ENCODE measurements at regions of chr3 and their contacts with region 1.

Region 1: DNA sequence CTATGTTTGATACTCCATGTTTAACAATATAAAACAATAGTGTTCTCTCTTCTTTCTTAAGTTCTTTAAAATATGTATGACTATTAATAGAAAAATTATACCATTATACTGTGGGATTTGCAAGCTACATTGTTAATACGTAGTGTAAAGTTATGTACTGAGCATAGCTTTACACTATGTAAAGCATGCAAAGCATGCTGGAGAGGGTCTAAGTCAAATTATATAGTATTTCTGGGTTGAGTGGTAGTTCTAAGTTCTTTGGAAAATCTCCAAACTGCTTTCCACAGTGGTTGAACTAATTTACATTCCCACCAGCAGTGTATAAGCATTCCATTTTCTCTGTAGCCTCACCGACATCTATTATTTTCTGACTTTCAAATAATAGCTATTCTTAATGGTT is 253.0 kb downstream of the RAP2B start:
- DNase-seq: no peak
- ATAC-seq: no peak
- H3K4me3 Mint-ChIP-seq: no peak overlapping the region
- H3K27ac Mint-ChIP-seq: no peak overlapping the region
- H3K4me1 Mint-ChIP-seq: peaks cover 7% of the 10 kb centered on the region
- H3K27me3 Mint-ChIP-seq: no peaks in the 10 kb centered on the region

Region 2: GRCh38 chr3:152745646-152746045 is 669.3 kb before region 1 on chr3:
- CTCF ChIA-PET with region 1: no interaction called
- POLR2A ChIA-PET with region 1: interaction called, 10 read pairs
- intact Hi-C with region 1: no loop called
- DNase-seq: no peak
- ATAC-seq: no peak
- H3K4me3 Mint-ChIP-seq: no peak overlapping the region
- H3K27ac Mint-ChIP-seq: no peak overlapping the region
- H3K4me1 Mint-ChIP-seq: no peaks in the 10 kb centered on the region
- H3K27me3 Mint-ChIP-seq: no peaks in the 10 kb centered on the region

Region 3: DNA sequence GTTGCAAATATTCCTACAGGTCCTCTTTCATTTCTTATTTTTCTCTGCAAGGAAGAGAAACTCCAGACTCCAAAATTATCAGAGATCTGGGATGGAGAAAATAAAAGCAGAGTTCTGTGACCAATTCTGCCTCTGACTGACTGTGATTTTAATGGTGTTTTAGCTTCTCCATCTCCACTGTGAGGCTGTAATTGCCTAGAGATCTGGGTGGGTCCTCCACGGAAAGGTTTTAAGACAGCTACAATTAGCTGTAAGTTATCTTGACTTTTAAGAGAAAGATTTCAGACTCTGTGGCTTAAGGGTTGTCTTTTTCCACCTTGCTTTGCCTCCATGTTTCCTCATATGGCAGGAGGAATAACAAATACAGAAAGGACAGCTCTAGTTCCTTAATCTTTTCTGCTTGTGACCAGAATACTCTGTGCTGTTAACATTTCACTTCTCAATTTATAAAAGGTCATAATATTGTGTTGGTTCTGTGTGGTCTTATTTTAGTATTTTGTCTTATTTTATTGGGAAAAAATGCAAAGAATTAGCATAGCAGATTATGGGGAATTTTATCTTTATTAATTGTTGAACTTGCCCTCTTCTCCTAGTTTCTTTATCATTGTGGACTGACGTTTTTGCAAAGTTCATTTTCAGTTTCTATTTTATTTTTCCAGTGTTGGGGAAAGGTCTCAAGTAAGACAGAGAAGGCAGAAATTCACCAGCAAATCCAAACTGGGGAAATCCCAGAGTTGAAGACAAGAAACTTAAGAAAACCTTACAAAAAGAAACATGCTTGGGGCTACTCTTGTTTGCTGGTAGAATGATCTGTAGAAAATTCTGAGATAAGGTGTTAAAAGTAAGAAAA is 95.1 kb before region 1 on chr3:
- CTCF ChIA-PET with region 1: no interaction called
- POLR2A ChIA-PET with region 1: no interaction called
- intact Hi-C with region 1: no loop called
- DNase-seq: no peak
- ATAC-seq: peak; percentile 63
- H3K4me3 Mint-ChIP-seq: peak overlapping the region; percentile 27
- H3K27ac Mint-ChIP-seq: peak overlapping the region; percentile 51
- H3K4me1 Mint-ChIP-seq: peaks cover 19% of the 10 kb centered on the region
- H3K27me3 Mint-ChIP-seq: no peaks in the 10 kb centered on the region